Activated CD8-positive, alpha-beta memory T cell treated with anti-CD3 and anti-CD28 coated beads, Interleukin-2, amount 10 ng/mL, durations not matched to agents 7 days and 5 days (primary cell): ENCODE measurements at regions of chr3 and their contacts with region 1.

Region 1: GRCh38 chr3:12810013-12810780 is 13.7 kb downstream of the CAND2 start:
- DNase-seq: peak; percentile 96
- ATAC-seq: peak; percentile 99
- H3K4me3 Mint-ChIP-seq: peak overlapping the region; percentile 54
- H3K27ac Mint-ChIP-seq: peak overlapping the region; percentile 67
- H3K4me1 Mint-ChIP-seq: peaks cover 5% of the 10 kb centered on the region
- H3K27me3 Mint-ChIP-seq: peaks cover 11% of the 10 kb centered on the region

Region 2: GRCh38 chr3:12796171-12797123 is 13.8 kb before region 1 on chr3 and contains the start of gene CAND2:
- CTCF ChIA-PET with region 1: interaction called, 11 read pairs
- DNase-seq: peak; percentile 38
- ATAC-seq: peak; percentile 73
- H3K4me3 Mint-ChIP-seq: peak within 1 kb of the TSS; percentile 26
- H3K27ac Mint-ChIP-seq: no peak within 1 kb of the TSS
- H3K4me1 Mint-ChIP-seq: peaks cover 3% of the 10 kb centered on the region
- H3K27me3 Mint-ChIP-seq: peaks cover 29% of the 10 kb centered on the region
- total RNA-seq, gene CAND2: 0.05 to 0.09 TPM

Region 3: GRCh38 chr3:12822725-12823373 is 12.7 kb after region 1 on chr3:
- CTCF ChIA-PET with region 1: interaction called, 12 read pairs
- DNase-seq: no peak
- ATAC-seq: no peak
- H3K4me3 Mint-ChIP-seq: no peak overlapping the region
- H3K27ac Mint-ChIP-seq: no peak overlapping the region
- H3K4me1 Mint-ChIP-seq: no peaks in the 10 kb centered on the region
- H3K27me3 Mint-ChIP-seq: no peaks in the 10 kb centered on the region

Region 4: DNA sequence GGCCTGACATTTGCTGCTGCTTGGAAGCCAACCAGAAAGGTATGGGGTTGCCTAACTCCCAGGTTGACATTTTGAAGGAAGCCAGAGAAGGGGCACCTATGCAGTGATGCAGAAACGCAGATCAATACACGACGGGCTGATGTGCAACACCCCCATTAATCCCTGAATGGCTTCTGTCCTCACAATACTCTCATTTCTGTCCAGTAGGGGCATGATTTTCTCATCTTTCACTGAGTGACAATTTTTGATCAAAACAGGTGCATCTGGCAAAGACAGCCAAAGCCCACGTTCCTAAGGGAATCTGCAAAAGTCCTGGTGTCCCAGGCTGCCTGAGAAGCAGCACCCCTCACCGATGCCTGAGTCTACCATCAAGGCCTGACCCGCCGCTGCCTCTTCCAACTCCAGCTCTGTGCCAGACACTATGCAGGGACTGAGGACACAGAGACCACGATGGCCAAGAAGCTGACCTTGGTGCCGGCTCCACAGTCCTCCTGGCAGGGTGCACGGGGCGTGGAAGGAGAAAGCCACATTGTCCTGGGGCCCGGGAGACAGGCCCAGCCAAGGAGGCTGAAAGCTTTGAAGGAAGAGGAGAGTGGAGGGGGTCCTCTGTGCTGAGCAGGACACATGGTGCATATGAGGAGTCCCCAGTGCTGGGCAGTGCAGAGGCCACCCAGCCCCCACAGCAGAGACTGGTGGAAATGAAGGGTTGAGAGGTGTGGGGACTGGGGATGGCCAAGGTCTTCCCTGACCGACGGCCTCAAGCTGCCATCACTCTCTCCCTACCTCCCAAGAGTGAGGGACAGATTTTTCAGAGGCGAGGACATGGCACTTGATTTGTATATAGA is 450.3 kb after region 1 on chr3:
- CTCF ChIA-PET with region 1: no interaction called
- DNase-seq: no peak
- ATAC-seq: no peak
- H3K4me3 Mint-ChIP-seq: no peak overlapping the region
- H3K27ac Mint-ChIP-seq: no peak overlapping the region
- H3K4me1 Mint-ChIP-seq: peaks cover 7% of the 10 kb centered on the region
- H3K27me3 Mint-ChIP-seq: peaks cover 6% of the 10 kb centered on the region